HEK293T (cell line): ENCODE measurements at regions of chr3 and their contacts with region 1.

Region 1: GRCh38 chr3:51670823-51671733 is at the start of gene TEX264:
- DNase-seq: peak; percentile 96

Region 2: GRCh38 chr3:51659942-51660341 is 11.1 kb before region 1 on chr3:
- CTCF ChIA-PET with region 1: interaction called, 12 read pairs
- POLR2A ChIA-PET with region 1: interaction called, 5 read pairs
- DNase-seq: no peak

Region 3: DNA sequence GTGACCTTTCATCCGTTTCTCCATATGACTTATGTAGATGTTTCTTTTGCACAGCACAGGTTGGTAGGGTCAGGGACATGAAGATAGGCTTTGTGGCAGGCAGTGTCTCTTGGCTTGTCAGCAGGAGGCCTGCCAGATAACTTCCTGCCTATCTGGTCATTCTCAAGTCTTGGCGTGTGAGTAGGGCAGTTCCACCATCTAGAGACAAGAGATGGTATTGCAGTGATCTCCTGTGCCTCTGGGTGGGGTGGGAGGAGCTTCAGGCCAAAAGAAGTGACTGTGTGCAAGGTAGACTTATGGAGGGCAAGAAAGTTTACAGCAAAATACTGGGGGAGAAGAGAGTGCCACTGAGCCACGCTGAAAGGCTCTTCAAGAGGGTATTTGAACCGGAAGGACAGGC is 11.0 kb after region 1 on chr3:
- CTCF ChIA-PET with region 1: interaction called, 13 read pairs
- POLR2A ChIA-PET with region 1: interaction called, 16 read pairs
- DNase-seq: peak; percentile 77

Region 4: DNA sequence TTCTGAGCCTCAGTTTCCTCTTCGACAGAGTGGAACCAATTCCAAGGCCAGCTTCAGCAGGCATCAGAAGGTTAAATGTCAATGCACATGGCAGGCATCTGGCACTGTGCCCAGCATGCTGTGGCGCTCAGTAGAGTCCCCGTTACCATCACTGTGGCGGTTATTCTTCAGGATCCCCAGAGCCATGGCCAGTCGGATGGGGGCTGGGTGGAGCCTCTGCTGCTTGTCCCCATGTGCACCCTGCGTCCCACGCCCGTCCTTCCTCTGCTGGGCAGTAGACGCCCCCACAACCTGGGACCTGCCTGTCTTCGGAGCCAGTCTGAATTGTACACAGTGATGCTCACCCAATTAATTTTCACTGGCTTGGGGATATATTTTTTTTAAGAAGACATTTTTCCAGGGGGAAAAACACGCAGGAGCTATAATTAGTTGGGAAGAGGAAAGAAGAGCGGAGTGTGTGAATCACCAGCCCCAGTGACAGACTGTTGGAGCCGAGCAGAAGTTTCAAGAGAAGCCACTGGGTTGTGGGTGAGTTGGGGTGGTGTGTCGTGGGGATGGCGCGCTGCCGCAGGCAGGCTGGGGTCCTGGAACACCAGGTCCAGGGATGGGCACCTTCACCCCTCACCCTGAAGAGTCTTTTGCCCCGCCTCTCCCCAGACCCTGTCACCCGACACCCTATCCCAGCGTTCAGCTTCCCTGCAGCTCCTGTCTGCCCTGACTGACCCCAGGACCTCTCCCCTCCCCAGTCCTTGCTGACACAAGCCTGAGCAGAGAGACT is 351.4 kb after region 1 on chr3:
- CTCF ChIA-PET with region 1: no interaction called
- POLR2A ChIA-PET with region 1: no interaction called
- DNase-seq: no peak